AG04450 (cell line): ENCODE measurements at regions of chr2 and their contacts with region 1.

Region 1: DNA sequence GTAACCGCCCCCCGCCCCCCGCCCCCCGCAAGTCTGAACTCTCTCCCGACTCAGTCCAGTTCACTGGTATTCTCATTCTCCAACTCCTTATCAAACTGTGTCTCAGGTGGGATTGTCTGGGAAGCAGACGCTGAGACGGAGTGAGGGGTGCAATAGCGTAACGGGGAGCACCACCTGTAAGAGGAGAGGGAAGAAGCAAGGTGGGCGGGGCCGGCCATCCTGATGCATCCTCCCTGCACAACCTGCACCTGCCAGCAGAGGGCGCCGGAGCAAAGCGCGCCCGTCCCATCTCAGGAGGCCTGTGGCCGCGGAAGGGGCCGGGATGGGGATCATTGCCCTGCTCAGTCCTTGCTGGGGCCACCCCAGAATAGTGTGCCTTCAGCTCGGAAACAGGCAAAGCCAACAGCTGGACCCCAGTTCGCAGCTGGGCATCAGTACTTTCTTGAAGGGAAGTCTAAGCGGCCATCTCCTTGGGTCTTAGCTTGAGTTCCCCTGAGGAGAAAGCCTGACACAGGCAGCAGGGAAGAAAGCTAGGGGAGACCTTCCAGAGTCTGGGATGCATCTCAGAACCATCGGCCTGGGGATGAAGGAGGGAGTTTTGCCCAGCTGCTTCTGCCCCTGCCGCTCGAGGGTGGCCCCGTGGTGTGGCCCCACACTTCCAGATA is 208.0 kb downstream of the TFCP2L1 start:
- DNase-seq: no peak
- H3K4me3 ChIP-seq: no peak overlapping the region
- H3K27ac ChIP-seq: no peak overlapping the region
- H3K27me3 ChIP-seq: peaks cover 34% of the 10 kb centered on the region
- CTCF ChIP-seq: peak; percentile 83

Region 2: DNA sequence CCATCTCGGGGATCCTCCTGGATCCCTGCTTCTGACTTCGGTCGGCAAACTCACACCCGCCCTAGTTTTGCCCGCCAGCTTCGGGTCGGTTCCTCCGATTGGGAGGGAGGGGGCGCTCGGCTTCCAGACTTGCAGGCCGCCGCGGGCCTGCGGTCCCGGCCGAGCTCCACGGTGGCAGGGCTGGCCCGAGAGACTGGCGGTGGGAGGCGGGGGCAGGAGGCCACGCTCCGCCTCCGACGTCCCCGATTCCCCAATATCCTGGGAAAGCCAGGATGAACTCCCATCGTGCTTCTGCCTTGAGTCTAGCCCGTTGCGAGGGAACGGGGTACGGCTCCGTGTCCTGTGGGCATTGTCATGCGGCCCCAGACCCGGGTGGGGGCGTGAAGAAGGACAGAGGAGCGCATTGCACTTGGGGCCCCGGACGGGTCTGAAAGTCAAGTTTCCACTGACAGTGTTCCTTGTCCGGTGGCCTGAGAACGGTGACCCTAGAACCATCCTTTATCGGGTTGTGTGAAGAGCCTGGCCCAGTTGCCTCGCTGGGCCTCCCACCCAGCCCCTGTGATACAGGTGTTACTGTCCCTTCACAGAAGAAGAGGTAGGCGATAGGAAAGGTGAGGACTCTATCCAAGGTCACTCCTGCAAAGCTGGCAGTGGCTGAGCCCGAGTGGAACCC is 733.4 kb before region 1 on chr2:
- CTCF ChIA-PET with region 1: interaction called, 10 read pairs
- POLR2A ChIA-PET with region 1: no interaction called
- DNase-seq: peak; percentile 26
- H3K4me3 ChIP-seq: no peak overlapping the region
- H3K27ac ChIP-seq: no peak overlapping the region
- H3K27me3 ChIP-seq: peaks cover 72% of the 10 kb centered on the region
- CTCF ChIP-seq: peak; percentile 79

Region 3: GRCh38 chr2:120686511-120687168 is 390.4 kb before region 1 on chr2:
- CTCF ChIA-PET with region 1: interaction called, 223 read pairs
- POLR2A ChIA-PET with region 1: interaction called, 16 read pairs
- DNase-seq: no peak
- H3K4me3 ChIP-seq: no peak overlapping the region
- H3K27ac ChIP-seq: no peak overlapping the region
- H3K27me3 ChIP-seq: peaks cover 15% of the 10 kb centered on the region
- CTCF ChIP-seq: peak; percentile 38

Region 4: GRCh38 chr2:120710256-120710655 is 366.8 kb before region 1 on chr2:
- CTCF ChIA-PET with region 1: interaction called, 11 read pairs
- POLR2A ChIA-PET with region 1: no interaction called
- DNase-seq: no peak
- H3K4me3 ChIP-seq: no peak overlapping the region
- H3K27ac ChIP-seq: no peak overlapping the region
- H3K27me3 ChIP-seq: peaks cover 5% of the 10 kb centered on the region
- CTCF ChIP-seq: no peak

Region 5: DNA sequence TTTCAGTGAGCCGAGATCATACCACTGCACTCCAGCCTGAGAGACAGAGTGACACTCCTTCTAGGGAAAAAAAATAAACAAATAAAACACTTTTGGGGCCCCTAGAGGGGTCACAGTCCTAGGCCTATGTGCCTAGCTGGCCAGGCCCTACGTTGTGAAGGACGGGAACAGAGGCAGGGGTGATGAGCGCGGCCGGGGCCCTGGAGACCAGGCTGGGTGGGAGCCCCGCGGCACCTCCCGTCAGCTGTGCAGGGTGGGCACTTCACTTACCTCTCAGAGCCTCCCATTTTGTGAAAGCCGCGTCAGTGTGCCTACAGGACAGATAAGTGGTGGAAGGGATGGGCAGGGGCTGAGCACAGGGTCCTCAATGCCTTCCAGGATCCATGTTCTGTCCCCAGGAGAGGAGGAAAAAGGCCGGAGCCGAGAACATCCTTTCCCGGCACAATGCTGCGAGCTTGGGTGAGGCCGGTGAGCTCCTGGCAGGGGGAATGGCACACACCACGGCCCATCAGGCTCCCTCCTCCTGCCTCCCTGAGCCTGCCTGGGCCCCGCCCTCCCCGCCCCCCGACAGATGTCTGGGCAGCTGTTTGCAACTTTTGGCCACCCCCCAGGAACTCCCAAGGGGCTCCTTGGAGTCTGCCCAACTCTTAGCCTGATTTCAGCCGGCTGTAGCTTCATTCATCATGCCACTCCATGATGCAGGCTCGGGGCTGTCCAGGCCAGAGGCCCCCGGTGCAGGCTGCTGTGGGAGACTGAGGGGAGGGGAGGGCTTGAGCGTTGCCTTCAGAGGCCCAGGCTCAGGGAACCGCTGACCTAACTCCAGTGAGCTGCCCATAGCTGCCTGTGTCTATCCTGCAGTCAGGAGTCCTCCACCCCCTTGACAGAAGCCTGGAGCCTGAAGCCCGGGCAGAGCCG is 11.5 kb after region 1 on chr2:
- CTCF ChIA-PET with region 1: interaction called, 10 read pairs
- POLR2A ChIA-PET with region 1: no interaction called
- DNase-seq: no peak
- H3K4me3 ChIP-seq: no peak overlapping the region
- H3K27ac ChIP-seq: no peak overlapping the region
- H3K27me3 ChIP-seq: peaks cover 55% of the 10 kb centered on the region
- CTCF ChIP-seq: no peak